BJ (cell line): ENCODE measurements at regions of chr2 and their contacts with region 1.

Region 1: DNA sequence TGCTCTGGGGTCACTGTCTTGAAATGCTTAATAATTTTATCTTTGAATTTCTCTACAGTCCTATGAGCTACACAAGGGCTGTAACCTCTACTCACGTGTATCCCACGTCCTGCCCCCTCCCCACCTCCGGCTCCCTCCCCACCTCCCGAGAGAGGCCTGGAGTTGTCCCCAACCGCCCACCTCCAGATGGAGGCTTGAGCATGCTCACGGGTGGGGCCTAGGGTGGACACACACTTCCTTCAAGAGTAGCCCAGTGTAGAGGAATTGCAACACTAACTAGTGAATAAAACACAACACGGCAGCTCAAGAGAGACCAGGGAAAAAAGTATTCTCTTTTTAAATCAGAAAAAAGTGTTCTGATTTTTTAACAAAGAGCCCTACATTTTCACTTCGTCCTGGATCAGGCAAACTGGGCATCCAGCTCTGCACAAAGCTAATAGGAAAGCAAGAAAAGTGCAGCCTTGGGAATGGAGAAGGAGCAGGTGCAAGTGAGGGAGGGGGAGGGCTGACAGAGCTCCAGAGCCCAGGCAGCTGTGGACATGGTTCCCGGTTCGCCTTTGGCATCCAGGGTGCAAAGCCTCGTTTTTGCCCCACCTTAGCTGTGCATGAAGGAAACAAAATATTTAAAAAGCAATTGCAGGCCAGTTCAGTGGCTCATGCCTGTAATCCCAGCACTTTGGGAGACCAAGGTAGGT is 82.3 kb downstream of the FAM124B start:
- DNase-seq: no peak
- H3K4me3 ChIP-seq: no peak overlapping the region
- H3K27me3 ChIP-seq: peaks cover 16% of the 10 kb centered on the region
- CTCF ChIP-seq: no peak

Region 2: DNA sequence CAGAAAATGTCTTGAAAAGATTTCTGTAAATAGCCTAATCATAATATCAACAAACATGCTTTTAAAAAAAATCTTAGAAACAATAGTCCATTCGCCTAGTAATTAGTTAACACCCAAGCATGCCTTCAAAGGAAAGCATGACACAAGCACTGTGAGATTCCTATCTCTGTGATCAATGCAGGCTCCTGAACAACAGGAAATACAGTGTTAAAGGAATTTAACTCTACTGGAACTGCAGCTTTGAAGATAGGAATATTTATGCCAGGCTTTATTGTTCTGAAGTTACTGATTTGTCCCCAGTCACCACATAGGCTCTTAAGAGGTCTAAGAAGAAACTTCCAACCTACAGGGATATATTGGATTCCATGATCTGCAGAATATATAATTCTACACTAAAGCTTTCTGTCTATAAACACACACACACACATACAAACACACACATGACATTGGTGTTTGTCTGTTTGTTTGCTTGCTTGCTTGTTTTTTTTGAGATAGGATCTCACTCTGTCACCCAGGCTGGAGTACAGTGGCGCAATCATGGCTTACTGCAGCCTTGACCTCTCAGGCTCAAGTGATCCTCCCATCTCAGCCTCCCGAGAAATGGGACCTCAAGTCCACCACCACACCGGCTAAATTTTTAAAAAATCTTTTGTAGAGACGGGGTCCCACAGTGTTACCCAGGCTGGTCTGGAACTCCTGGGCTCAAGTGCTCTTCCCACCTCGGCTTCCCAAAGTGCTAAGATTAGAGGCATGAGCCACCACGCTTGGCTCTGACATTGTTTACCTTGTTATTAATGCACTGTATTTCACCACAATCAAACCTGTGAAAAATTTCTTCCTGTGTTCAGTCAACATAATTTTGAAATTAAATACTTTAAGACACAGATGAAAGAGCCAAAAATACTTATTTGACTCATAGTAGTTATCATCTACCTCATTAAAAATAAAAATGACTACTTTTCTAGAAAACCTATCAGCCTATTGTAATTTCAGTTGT is 98.0 kb after region 1 on chr2:
- CTCF ChIA-PET with region 1: no interaction called
- POLR2A ChIA-PET with region 1: no interaction called
- DNase-seq: no peak
- H3K4me3 ChIP-seq: no peak overlapping the region
- H3K27me3 ChIP-seq: no peaks in the 10 kb centered on the region
- CTCF ChIP-seq: no peak

Region 3: GRCh38 chr2:225122583-225123486 is 803.2 kb after region 1 on chr2:
- CTCF ChIA-PET with region 1: no interaction called
- POLR2A ChIA-PET with region 1: interaction called, 12 read pairs
- DNase-seq: no peak
- H3K4me3 ChIP-seq: no peak overlapping the region
- H3K27me3 ChIP-seq: no peaks in the 10 kb centered on the region
- CTCF ChIP-seq: peak; percentile 69